ENCODE measurements at regions of chr16 and their contacts with region 1.

Region 1: GRCh38 chr16:30032083-30032819 is 1.2 kb upstream of the TLCD3B start:
- DNase-seq: peak; percentile 72
- H3K4me3 Mint-ChIP-seq: no peak overlapping the region
- H3K27ac Mint-ChIP-seq: no peak overlapping the region
- H3K4me1 Mint-ChIP-seq: no peaks in the 10 kb centered on the region
- H3K27me3 Mint-ChIP-seq: peaks cover 34% of the 10 kb centered on the region
- CTCF ChIP-seq: peak; percentile 84

Region 2: GRCh38 chr16:30052671-30053372 is 20.6 kb after region 1 on chr16:
- CTCF ChIA-PET with region 1: interaction called, 20 read pairs
- POLR2A ChIA-PET with region 1: interaction called, 5 read pairs
- intact Hi-C with region 1: no loop called
- DNase-seq: peak; percentile 92
- H3K4me3 Mint-ChIP-seq: peak overlapping the region; percentile 77
- H3K27ac Mint-ChIP-seq: peak overlapping the region; percentile 50
- H3K4me1 Mint-ChIP-seq: peaks cover 28% of the 10 kb centered on the region
- H3K27me3 Mint-ChIP-seq: no peaks in the 10 kb centered on the region
- CTCF ChIP-seq: no peak